ENCODE measurements at regions of chr22 and their contacts with region 1.

Region 1: GRCh38 chr22:31313366-31314147 is 21.3 kb upstream of the PIK3IP1 start:
- DNase-seq: peak in 1 of 2 donors; percentile 53
- ATAC-seq: peak; percentile 78 to 83
- H3K4me3 ChIP-seq: no peak overlapping the region
- H3K27ac ChIP-seq: no peak overlapping the region
- H3K4me1 ChIP-seq: peaks cover 0 to 8% of the 10 kb centered on the region in 2 donors
- H3K27me3 ChIP-seq: no peaks in the 10 kb centered on the region
- CTCF ChIP-seq: peak; percentile 46 to 89 (median 78)
- POLR2A ChIP-seq: no peak

Region 2: DNA sequence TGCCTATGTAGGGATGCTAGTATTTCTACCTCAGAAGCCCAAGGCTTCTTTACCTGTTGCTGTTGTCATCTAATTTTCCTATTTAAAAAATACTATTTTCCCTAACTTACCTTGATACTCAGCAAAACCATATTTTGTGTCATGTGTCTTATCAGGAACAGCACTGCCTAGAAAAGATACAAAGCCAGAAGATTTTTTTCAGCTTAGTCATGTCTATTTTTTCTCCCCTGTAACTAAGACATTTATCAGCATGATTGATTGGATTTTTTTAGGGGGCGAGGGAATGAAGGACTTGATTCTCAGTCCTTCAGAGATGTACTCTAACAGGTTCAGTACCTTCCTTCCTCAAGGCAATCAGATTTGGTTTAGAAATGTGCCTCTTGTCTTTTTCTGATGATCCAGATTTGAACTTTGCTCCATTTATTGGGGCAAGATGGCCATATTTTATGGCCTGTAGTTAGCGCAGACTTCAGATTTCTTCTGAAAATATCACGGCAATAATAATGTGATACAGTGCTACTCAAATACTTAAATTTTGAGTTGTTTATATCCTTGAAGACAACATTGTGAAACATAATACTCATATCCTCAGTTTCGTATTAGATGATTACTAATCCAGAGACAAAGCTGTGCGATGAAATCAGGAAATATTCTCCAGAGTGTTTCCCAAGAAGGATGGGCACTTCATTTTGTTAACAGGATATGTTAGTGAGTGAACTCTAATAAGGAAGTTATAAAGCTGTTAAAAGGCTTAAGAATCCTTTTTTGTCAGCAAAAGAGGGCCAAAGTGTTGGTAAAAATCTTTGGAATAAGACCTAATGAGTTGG is 17.5 kb before region 1 on chr22:
- in situ Hi-C with region 1: no loop called
- intact Hi-C with region 1: loop called (anchors 2 kb)
- DNase-seq: no peak
- ATAC-seq: peak in 1 of 2 donors; percentile 7
- H3K4me3 ChIP-seq: no peak overlapping the region
- H3K27ac ChIP-seq: peak overlapping the region; percentile 63 to 98 (median 71)
- H3K4me1 ChIP-seq: peaks cover 40 to 41% of the 10 kb centered on the region in 2 donors
- H3K27me3 ChIP-seq: no peaks in the 10 kb centered on the region
- CTCF ChIP-seq: no peak
- POLR2A ChIP-seq: no peak

Region 3: GRCh38 chr22:31625661-31626426 is 312.3 kb after region 1 on chr22:
- in situ Hi-C with region 1: no loop called
- intact Hi-C with region 1: no loop called
- DNase-seq: no peak
- ATAC-seq: peak in 1 of 2 donors; percentile 6
- H3K4me3 ChIP-seq: no peak overlapping the region
- H3K27ac ChIP-seq: peak overlapping the region; percentile 16 to 43 (median 32)
- H3K4me1 ChIP-seq: peaks cover 40 to 49% of the 10 kb centered on the region in 2 donors
- H3K27me3 ChIP-seq: no peaks in the 10 kb centered on the region
- CTCF ChIP-seq: peak in 1 of 5 experiments; percentile 11
- POLR2A ChIP-seq: no peak